ENCODE measurements at regions of chr12 and their contacts with region 1.

Region 1: DNA sequence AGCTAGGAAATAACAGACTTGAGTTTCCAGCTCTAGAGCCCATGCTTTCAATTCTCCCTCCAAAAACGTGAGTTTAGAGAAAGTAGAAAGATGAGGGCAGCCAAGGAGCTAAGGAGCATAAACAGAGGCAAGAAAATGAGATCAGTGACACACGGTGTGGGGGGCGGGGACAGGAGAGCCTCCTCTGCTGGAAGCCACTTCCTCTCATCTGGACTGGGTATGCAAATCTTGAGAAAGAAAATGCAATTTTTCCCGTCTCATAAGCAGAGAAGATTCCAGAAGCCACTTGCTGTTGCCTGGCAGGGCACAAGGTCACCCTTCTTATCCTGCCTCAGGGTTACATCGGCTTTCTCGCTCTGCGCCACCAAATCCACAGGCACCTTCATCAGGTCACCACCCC is 6.0 kb downstream of the OR10P1 start:
- DNase-seq: no peak
- ATAC-seq: no peak
- H3K4me3 ChIP-seq: no peak overlapping the region
- H3K27ac ChIP-seq: no peak overlapping the region
- H3K4me1 ChIP-seq: peaks cover 0 to 17% of the 10 kb centered on the region in 2 experiments; a peak in 2 of 4 replicates
- H3K27me3 ChIP-seq: peaks cover 13% of the 10 kb centered on the region; the same call in 1 of the 2 replicates
- CTCF ChIP-seq: no peak
- POLR2A ChIP-seq: no peak
- RAD21 ChIP-seq: no peak

Region 2: GRCh38 chr12:55654511-55655214 is 12.0 kb after region 1 on chr12:
- CTCF ChIA-PET with region 1: interaction called, 30 read pairs
- POLR2A ChIA-PET with region 1: no interaction called
- RAD21 ChIA-PET with region 1: interaction called, 3 to 4 read pairs
- intact Hi-C with region 1: loop called (anchors 1 kb)
- DNase-seq: no peak
- ATAC-seq: no peak
- H3K4me3 ChIP-seq: no peak overlapping the region
- H3K27ac ChIP-seq: no peak overlapping the region
- H3K4me1 ChIP-seq: no peaks in the 10 kb centered on the region
- H3K27me3 ChIP-seq: no peaks in the 10 kb centered on the region
- CTCF ChIP-seq: no peak
- POLR2A ChIP-seq: no peak
- RAD21 ChIP-seq: no peak